ENCODE measurements at regions of chr1 and their contacts with region 1.

Region 1: DNA sequence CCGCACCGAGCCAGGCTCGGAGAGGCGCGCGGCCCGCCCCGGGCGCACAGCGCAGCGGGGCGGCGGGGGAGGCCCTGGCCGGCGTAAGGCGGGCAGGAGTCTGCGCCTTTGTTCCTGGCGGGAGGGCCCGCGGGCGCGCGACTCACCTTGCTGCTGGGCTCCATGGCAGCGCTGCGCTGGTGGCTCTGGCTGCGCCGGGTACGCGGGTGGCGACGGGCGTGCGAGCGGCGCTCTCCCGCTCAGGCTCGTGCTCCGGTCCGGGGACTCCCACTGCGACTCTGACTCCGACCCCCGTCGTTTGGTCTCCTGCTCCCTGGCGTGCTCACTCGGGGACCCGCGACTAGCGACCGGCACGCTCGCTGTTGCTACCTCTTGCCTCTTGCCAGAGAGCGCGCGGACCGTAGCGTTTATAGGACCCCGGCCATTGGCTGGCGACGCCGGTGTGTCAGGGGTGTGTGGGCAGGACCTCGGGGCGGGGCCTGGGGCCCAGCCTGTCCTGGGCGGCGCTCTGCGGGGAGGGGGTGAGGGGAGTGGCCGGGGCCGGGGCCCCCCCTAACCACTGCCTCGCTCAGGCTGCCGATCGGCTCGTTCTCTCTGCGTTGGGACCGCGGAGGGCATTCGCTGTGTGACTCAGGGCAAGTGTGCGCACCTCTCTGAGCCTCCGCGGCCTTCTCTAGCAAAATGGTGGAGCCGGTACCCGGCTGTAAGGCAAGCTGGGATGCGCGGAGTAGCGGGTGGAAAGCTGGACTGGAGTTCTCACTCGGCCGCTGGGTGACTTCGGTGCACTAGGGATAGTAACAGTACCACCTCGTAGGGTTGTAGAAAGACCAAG is at the start of gene SLC2A1:
- DNase-seq: peak; percentile 93
- H3K4me3 Mint-ChIP-seq: peak within 1 kb of the TSS; percentile 97
- H3K27ac Mint-ChIP-seq: peak within 1 kb of the TSS; percentile 100
- H3K4me1 Mint-ChIP-seq: peaks cover 51% of the 10 kb centered on the region
- H3K27me3 Mint-ChIP-seq: peaks cover 6% of the 10 kb centered on the region
- total RNA-seq, gene SLC2A1: 111 and 120 TPM in 2 replicates

Region 2: DNA sequence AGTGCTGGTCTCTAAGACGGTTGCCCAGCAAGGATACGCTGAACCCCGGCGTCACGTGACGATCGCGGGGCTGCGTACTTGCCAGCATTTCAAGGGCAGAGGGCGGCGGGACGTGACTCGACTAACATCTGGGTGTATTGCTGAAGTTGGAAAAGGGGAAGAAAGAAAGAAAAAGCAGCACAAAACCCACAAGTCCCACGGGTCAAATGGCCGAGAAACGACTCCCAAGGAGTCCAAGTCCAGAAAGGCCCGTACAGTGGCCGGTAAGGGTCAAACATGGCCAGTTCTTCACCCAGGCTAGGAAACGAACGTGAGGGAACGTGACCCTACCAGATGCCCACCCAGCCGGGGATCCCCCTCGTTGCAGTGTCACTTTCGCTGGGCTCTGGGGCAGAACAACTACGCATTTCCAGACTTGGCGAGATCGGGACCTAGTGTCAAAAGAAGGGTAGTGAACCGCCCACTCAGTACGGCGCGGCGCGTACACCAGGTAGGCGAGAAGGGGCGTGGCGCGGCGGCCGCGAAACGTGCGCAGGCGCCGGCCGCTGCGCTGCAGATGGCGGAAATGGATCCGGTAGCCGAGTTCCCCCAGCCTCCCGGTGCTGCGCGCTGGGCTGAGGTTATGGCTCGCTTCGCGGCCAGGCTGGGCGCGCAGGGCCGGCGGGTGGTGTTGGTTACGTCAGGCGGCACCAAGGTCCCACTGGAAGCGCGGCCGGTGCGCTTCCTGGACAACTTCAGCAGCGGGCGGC is 502.5 kb before region 1 on chr1 and contains the starts of genes PPCS and ZMYND12:
- intact Hi-C with region 1: loop called (anchors 10 kb)
- DNase-seq: peak; percentile 87
- H3K4me3 Mint-ChIP-seq: peak within 1 kb of the TSS; percentile 95
- H3K27ac Mint-ChIP-seq: peak within 1 kb of the TSS; percentile 98
- H3K4me1 Mint-ChIP-seq: peaks cover 28% of the 10 kb centered on the region
- H3K27me3 Mint-ChIP-seq: no peaks in the 10 kb centered on the region
- total RNA-seq, gene PPCS: 40.1 and 48.0 TPM in 2 replicates
- total RNA-seq, gene ZMYND12: not detected in 2 replicates

Region 3: GRCh38 chr1:42822800-42823392 is 135.8 kb before region 1 on chr1:
- intact Hi-C with region 1: no loop called
- DNase-seq: no peak
- H3K4me3 Mint-ChIP-seq: no peak overlapping the region
- H3K27ac Mint-ChIP-seq: no peak overlapping the region
- H3K4me1 Mint-ChIP-seq: peaks cover 3% of the 10 kb centered on the region
- H3K27me3 Mint-ChIP-seq: no peaks in the 10 kb centered on the region

Region 4: DNA sequence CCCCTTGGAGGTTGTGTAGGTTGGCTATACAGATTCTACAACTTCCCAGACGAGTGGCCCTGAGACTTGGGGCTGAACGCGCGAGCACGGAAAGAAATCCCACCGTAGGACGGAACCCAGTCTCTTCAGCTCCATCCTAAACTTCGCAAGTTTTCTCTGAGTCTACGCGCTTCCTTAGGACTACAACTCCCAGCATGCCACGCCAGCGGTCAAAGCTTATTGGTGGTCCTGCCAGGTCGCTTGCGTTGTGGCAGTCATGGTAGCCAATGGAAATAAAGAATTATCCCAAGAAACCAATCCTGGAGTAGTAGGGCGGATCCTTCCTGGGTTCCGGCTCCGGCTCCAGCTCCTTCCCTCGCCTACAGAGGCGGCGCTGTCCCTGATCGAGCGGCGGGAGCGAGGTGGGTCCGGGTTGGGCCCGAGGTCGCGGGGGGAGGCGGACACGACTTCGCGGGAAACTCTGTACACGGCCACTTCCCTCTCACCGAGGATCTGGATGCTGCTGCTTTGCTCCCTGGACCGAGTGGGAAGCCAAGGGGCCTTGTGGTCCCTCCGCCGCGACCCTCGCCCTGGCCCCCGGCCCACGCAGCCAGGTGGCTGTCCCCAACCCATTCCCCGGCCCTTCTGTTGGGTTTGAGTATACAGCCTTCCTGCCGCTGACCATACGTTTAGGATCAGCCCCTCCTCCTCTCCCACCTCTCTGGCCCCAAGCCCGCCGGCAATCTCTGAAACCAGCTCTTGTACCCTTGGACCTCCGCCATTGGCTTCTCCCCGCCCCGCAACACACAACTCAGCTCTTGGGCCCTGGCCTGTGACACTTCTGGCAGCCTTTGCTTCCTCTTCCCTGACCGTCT is 112.2 kb before region 1 on chr1 and contains the start of gene ZNF691:
- intact Hi-C with region 1: loop called (anchors 1 kb)
- DNase-seq: peak; percentile 86
- H3K4me3 Mint-ChIP-seq: peak within 1 kb of the TSS; percentile 97
- H3K27ac Mint-ChIP-seq: peak within 1 kb of the TSS; percentile 78
- H3K4me1 Mint-ChIP-seq: peaks cover 41% of the 10 kb centered on the region
- H3K27me3 Mint-ChIP-seq: no peaks in the 10 kb centered on the region
- total RNA-seq, gene ZNF691: 10.0 and 12.9 TPM in 2 replicates

Region 5: DNA sequence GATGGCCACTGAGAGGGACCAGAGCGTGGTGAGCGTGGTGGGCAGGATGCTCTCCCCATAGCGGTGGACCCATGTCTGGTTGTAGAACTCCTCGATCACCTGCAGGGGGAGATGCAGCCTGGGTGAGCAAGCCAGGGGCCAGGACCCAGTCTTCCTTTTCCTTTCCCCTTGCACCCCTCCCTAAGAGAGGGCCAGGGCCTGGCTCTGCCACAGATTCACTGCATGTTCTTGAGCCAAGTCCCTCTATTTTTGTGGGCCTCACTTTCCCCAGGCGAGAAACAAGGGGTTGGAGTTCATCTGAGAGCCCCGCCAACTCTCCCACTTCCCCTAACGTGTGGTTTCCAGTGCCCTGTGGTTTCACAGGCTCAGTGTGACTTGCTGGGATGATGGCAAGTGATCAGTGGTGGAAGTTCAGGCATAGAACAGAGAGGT is 27.6 kb before region 1 on chr1:
- intact Hi-C with region 1: loop called (anchors 1 kb)
- DNase-seq: peak; percentile 53
- H3K4me3 Mint-ChIP-seq: peak overlapping the region; percentile 71
- H3K27ac Mint-ChIP-seq: peak overlapping the region; percentile 86
- H3K4me1 Mint-ChIP-seq: peaks cover 70% of the 10 kb centered on the region
- H3K27me3 Mint-ChIP-seq: no peaks in the 10 kb centered on the region

Region 6: GRCh38 chr1:42941640-42942330 is 16.9 kb before region 1 on chr1:
- intact Hi-C with region 1: loop called (anchors 1 kb)
- DNase-seq: no peak
- H3K4me3 Mint-ChIP-seq: peak overlapping the region; percentile 28
- H3K27ac Mint-ChIP-seq: peak overlapping the region; percentile 93
- H3K4me1 Mint-ChIP-seq: peaks cover 97% of the 10 kb centered on the region
- H3K27me3 Mint-ChIP-seq: no peaks in the 10 kb centered on the region

Region 7: DNA sequence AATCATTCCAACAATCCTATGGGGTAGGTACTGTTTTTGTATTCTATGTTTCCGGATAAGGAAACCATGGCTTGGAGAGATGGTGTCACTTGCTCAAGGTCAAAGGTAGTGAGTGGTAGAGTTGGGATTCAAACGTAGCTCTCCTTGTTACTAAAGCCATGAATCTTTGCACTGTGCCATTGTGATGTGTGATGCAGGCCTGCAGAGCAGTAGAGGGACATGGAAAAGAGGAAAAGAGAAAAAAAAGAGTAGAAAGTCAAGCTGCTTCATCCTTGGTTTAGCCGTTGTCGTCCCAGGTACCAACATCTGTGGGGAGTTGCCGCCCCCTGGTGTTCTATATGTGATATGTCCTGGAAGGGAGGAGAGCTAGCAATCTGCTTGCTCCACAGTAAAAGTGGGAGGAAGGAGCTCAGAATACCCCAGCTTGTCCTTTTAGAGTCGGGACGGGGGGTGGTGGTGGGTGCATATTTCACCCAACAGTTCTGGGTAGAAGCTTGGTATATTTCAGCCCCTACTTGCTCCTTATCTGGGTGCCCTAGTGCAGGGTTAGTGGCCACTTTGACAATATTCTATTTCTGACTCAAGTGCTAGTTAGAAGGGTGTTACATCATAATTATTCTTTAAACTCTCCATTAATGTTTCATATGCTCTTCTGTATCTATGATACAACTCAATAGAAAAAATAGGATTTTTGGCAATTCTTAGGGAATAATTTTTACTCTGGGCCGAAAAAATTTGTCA is 115.0 kb after region 1 on chr1:
- intact Hi-C with region 1: loop called (anchors 1 kb)
- DNase-seq: peak; percentile 58
- H3K4me3 Mint-ChIP-seq: no peak overlapping the region
- H3K27ac Mint-ChIP-seq: no peak overlapping the region
- H3K4me1 Mint-ChIP-seq: peaks cover 6% of the 10 kb centered on the region
- H3K27me3 Mint-ChIP-seq: peaks cover 4% of the 10 kb centered on the region

Region 8: GRCh38 chr1:43650310-43651085 is 691.8 kb after region 1 on chr1:
- intact Hi-C with region 1: loop called (anchors 10 kb)
- DNase-seq: peak; percentile 89
- H3K4me3 Mint-ChIP-seq: peak overlapping the region; percentile 98
- H3K27ac Mint-ChIP-seq: peak overlapping the region; percentile 98
- H3K4me1 Mint-ChIP-seq: peaks cover 27% of the 10 kb centered on the region
- H3K27me3 Mint-ChIP-seq: peaks cover under 1% of the 10 kb centered on the region

Region 9: GRCh38 chr1:44174630-44175029 is 1215.9 kb after region 1 on chr1:
- intact Hi-C with region 1: no loop called
- DNase-seq: no peak
- H3K4me3 Mint-ChIP-seq: no peak overlapping the region
- H3K27ac Mint-ChIP-seq: no peak overlapping the region
- H3K4me1 Mint-ChIP-seq: no peaks in the 10 kb centered on the region
- H3K27me3 Mint-ChIP-seq: peaks cover 6% of the 10 kb centered on the region